Right cardiac atrium (tissue), 5 donors: ENCODE measurements at regions of chr20 and their contacts with region 1.

Region 1: GRCh38 chr20:47356526-47357295 is at the start of gene ZMYND8:
- DNase-seq: peak; percentile 80 to 95 (median 94)
- ATAC-seq: peak; percentile 50 to 56
- H3K4me3 ChIP-seq: peak within 1 kb of the TSS; percentile 18
- H3K27ac ChIP-seq: peak within 1 kb of the TSS; percentile 100
- H3K4me1 ChIP-seq: peaks cover 59% of the 10 kb centered on the region
- H3K27me3 ChIP-seq: no peaks in the 10 kb centered on the region
- total RNA-seq, gene ZMYND8: 20.4 to 35.7 (median 31.4) TPM

Region 2: DNA sequence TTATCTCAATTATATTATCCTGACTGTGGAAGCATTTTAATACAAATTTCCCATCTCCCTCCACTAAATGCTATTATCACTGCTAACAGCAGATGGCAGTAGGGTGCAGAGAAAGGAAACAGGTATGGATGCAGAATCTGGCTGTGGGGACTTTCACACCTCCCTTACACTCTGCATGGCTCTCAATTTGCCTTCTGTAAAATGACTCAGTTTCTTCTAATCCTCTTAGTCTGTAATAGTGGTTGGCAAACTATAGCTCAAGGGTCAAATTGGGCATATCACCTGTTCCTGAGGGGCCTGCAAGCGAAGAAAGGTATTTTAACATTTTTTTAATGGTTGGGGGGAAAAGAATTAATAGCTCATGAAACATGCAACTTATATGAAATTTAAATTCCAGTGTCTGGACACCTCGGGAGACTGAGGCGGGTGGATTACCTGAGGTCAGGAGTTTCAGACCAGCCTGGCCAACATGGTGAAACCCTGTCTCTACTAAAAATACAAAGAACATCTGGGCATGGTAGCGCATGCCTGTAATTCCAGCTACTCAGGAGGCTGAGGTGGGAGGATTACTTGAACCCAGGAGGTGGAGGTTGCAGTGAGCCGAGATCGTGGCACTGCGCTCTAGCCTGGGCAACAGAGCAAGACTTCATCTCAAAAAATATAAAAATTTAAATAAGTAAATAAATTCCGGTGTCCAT is 83.7 kb before region 1 on chr20:
- intact Hi-C with region 1: no loop called
- DNase-seq: no peak
- ATAC-seq: peak; percentile 50 to 72
- H3K4me3 ChIP-seq: no peak overlapping the region
- H3K27ac ChIP-seq: no peak overlapping the region
- H3K4me1 ChIP-seq: no peaks in the 10 kb centered on the region
- H3K27me3 ChIP-seq: no peaks in the 10 kb centered on the region

Region 3: GRCh38 chr20:47304287-47304686 is 52.4 kb before region 1 on chr20:
- intact Hi-C with region 1: loop called in 1 of 4 experiments (anchors 10 kb)
- DNase-seq: no peak
- ATAC-seq: peak in 1 of 2 donors; percentile 12
- H3K4me3 ChIP-seq: no peak overlapping the region
- H3K27ac ChIP-seq: peak overlapping the region; percentile 78
- H3K4me1 ChIP-seq: peaks cover 10% of the 10 kb centered on the region
- H3K27me3 ChIP-seq: no peaks in the 10 kb centered on the region

Region 4: GRCh38 chr20:47317127-47317895 is 39.4 kb before region 1 on chr20:
- intact Hi-C with region 1: loop called in 3 of 4 experiments (anchors 2 to 5 kb)
- DNase-seq: peak; percentile 81 to 88 (median 87)
- ATAC-seq: peak; percentile 77 to 88
- H3K4me3 ChIP-seq: no peak overlapping the region
- H3K27ac ChIP-seq: peak overlapping the region; percentile 100
- H3K4me1 ChIP-seq: peaks cover 49% of the 10 kb centered on the region
- H3K27me3 ChIP-seq: no peaks in the 10 kb centered on the region

Region 5: DNA sequence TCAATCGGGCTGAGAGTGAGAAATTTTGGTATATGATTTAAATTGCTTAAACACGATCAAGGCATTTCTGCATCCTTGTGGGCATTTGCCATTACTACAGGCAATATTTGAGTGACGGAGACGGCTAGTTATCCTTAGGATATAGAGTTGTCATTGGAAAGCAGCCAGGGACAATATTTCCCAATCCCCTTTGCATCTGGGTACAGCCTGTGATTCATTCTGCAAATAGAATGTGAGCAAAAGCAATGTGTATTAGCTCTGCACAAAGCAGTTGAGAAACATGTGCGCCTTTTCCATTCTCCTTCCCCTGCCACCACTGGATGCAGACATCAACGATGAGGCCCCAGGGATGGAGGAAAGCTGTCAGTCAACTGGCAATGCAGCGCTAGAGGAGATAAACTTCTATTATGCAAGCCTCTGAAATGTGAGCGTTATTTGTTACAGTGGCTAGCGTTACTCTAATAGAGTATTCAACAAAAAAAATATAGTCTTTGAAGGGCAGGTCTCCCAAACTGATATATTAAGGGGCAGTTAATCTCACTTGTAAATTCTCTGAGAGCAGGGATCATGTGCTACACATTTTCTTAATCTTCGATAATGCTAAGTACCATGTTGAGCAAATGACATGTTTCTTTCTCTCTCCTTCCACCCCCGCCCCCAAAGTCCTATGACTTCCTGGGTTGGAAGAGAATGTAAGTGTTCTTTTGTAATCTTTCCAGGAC is 107.8 kb after region 1 on chr20:
- intact Hi-C with region 1: no loop called
- DNase-seq: peak; percentile 78 to 80 (median 78)
- ATAC-seq: peak; percentile 96 to 97
- H3K4me3 ChIP-seq: no peak overlapping the region
- H3K27ac ChIP-seq: peak overlapping the region; percentile 22
- H3K4me1 ChIP-seq: no peaks in the 10 kb centered on the region
- H3K27me3 ChIP-seq: no peaks in the 10 kb centered on the region

Region 6: DNA sequence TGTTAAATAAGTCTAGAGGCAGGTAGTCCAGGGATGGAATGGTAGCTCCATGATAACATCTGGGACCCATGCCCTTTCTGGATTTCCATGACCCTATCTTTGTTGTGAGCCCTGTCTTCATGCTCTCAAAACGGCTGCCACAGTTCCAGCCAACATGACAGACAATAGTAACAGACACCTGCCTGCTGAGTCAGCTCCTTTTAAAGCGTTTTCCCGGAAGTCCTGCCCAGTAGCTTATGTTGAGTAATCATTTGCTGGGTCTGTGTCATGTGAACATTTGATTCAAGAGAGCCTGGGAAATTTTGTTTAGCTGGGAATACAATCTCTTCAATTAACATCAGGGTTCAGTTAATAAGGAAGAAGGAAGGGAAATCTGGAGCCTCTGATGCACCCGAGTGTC is 690.7 kb after region 1 on chr20:
- intact Hi-C with region 1: no loop called
- DNase-seq: no peak
- ATAC-seq: no peak
- H3K4me3 ChIP-seq: no peak overlapping the region
- H3K27ac ChIP-seq: no peak overlapping the region
- H3K4me1 ChIP-seq: no peaks in the 10 kb centered on the region
- H3K27me3 ChIP-seq: no peaks in the 10 kb centered on the region